ENCODE measurements at regions of chr2 and their contacts with region 1.

Region 1: GRCh38 chr2:217851191-217852020 is 151.4 kb downstream of the TNS1 start:
- DNase-seq: peak; percentile 21
- H3K4me3 ChIP-seq: no peak overlapping the region
- H3K27ac ChIP-seq: no peak overlapping the region
- H3K4me1 ChIP-seq: peaks cover 26% of the 10 kb centered on the region
- H3K27me3 ChIP-seq: no peaks in the 10 kb centered on the region
- CTCF ChIP-seq: no peak

Region 2: DNA sequence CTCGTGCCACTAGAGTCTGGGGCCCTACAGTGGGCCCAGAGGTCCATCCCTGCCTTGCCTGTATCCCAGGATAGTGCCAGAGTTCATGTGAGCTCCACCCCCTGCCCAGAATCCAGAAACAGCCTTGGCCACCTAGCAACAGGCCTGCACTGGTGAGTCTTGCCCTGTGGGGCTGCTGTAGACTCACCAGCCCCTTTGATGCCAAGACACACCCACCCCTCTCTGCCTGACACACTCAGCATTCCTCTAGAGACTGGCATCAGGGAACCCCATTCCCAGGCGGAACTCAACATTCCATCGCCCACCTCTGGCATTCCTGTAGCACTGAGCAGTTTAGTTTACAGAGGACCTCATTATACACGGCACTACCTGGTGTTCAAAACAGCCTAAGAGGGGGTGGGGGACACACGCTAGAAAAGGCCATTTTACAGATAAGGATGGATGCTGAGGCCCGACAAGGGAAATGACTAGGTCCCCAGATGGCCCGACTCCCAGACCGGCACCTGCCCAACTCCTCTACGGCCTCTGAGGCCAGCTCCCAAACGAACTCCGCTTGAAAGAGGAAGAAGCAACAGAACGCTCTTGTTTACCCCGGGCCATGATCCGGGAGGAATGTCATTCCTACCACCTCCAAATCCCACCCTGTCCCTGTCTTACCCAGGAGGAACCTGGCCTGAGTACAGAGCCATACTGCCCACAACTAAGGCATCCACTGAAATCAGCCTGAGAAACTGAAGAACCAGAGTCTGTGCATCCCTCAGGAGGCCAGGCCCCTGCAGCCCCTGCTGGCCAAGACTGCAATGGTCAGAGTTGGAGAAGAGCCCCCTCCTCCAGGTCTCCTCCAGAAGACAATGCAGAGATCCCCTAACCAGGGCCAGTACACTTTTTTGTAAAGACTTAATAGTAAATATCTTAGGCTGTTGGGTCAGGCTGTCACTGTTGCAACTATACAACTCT is 28.8 kb before region 1 on chr2:
- CTCF ChIA-PET with region 1: no interaction called
- dilution Hi-C with region 1: no loop called
- in situ Hi-C with region 1: no loop called
- intact Hi-C with region 1: loop called (anchors 2 kb)
- DNase-seq: peak; percentile 61
- H3K4me3 ChIP-seq: no peak overlapping the region
- H3K27ac ChIP-seq: no peak overlapping the region
- H3K4me1 ChIP-seq: peaks cover 11% of the 10 kb centered on the region
- H3K27me3 ChIP-seq: no peaks in the 10 kb centered on the region
- CTCF ChIP-seq: peak in 1 of 2 donors; percentile 13

Region 3: DNA sequence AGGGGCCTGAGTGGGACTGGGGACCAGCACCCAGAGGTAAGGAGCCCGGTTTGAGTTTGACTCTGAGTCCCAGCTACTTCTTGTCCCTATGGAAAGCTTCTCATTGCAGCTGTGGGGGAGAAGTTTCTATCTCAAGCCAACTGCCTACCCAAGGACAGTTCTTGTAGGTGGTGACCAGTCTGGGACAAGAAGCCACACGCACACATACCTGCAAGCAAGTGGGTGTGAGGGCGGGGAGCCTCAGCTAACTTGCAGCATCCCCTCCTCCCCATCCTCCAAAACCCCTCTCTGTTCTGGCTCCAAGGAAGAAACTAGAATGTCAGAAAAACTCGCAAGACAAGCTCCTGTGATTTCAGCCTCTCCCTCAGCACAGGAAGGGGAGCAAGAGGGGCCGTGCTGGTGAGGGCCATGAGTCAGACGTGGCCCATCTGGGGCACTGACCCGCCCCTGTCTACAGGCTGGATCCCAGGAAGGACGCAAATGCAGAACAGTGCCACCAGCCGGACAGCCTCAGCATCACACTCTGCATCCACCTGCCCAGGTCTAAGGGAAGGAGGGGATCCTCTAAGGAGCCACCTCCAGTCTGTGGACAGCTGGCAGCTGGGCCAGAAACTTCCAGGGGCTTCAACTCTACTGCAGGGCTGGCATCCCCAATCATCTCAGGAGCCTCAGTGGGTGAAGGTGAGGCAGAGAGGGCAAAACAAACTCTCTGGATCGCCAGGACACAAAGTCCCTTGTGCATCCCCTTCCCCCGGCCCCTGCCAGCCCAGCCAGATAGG is 48.0 kb after region 1 on chr2:
- CTCF ChIA-PET with region 1: no interaction called
- dilution Hi-C with region 1: no loop called
- in situ Hi-C with region 1: no loop called
- intact Hi-C with region 1: loop called (anchors 1 kb)
- DNase-seq: peak; percentile 76
- H3K4me3 ChIP-seq: no peak overlapping the region
- H3K27ac ChIP-seq: no peak overlapping the region
- H3K4me1 ChIP-seq: peaks cover 26% of the 10 kb centered on the region
- H3K27me3 ChIP-seq: peaks cover 3% of the 10 kb centered on the region
- CTCF ChIP-seq: peak; percentile 74 to 79